GM12878 (cell line): ENCODE measurements at regions of chr12 and their contacts with region 1.

Region 1: DNA sequence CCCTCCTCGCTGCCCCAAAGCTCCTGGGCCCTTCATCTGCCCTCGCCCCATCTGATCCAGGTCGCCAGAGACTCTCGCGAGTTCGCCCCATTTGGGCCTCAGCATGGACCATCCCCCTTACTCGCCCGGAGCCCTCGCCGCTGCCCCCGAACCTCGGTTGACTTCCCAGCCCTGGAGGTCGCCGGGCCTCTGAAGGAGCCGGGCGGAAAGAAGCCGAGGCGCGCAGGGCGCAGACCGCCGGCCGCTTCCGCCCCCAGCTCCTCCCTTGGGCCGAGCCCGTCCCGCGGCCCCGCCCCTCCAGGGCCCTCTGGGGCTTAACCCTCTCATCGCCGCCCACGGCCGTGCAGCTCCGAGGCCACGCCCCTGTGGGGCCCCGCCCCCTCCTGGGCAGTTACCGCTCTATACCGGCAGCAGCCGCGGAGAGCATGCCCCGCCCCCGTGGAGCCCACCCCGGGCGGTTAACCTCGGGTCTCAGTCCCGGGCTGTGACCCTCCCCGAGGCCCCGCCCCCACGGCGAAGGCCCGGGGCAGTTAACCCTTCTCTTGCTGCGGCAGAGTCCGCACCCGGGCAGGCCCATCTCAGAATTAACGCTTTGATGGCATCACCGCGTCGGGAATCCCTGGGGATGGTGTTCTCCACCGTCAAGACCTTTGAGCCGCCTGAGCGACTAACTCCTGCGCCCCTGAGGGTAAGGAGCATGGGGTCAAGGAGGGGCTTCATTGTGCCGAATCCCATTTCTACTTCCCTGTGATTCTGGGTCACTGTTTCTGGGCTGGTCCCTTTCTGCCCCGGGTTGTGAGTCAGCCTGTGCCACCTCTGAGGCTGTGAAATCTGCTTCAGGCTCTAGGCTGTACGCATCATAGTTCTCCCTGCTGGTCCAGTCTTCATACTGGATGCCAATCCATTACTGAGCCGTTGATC is at the start of gene SPSB2:
- DNase-seq: peak; percentile 69
- ATAC-seq: peak; percentile 91
- H3K4me3 ChIP-seq: peak within 1 kb of the TSS; percentile 87
- H3K27ac ChIP-seq: peak within 1 kb of the TSS; percentile 59
- H3K4me1 ChIP-seq: peaks cover 30% of the 10 kb centered on the region
- H3K27me3 ChIP-seq: no peaks in the 10 kb centered on the region
- CTCF ChIP-seq: no peak
- EP300 ChIP-seq: no peak
- POLR2A ChIP-seq: peak; percentile 77
- RAD21 ChIP-seq: no peak
- polyA plus RNA-seq, gene SPSB2: 0.08 to 0.24 TPM

Region 2: GRCh38 chr12:6697584-6698351 is 175.6 kb before region 1 on chr12:
- CTCF ChIA-PET with region 1: no interaction called
- POLR2A ChIA-PET with region 1: no interaction called
- RAD21 ChIA-PET with region 1: no interaction called
- SMC1A ChIA-PET with region 1: no interaction called
- in situ Hi-C with region 1: no loop called
- intact Hi-C with region 1: no loop called
- DNase-seq: no peak
- ATAC-seq: peak; percentile 65
- H3K4me3 ChIP-seq: no peak overlapping the region
- H3K27ac ChIP-seq: no peak overlapping the region
- H3K4me1 ChIP-seq: peaks cover 12% of the 10 kb centered on the region
- H3K27me3 ChIP-seq: peaks cover 13 to 16% of the 10 kb centered on the region in 2 experiments
- CTCF ChIP-seq: peak; percentile 50 to 63 (median 60); a peak in 5 of 6 replicates
- EP300 ChIP-seq: no peak
- POLR2A ChIP-seq: no peak
- RAD21 ChIP-seq: peak; percentile 71

Region 3: DNA sequence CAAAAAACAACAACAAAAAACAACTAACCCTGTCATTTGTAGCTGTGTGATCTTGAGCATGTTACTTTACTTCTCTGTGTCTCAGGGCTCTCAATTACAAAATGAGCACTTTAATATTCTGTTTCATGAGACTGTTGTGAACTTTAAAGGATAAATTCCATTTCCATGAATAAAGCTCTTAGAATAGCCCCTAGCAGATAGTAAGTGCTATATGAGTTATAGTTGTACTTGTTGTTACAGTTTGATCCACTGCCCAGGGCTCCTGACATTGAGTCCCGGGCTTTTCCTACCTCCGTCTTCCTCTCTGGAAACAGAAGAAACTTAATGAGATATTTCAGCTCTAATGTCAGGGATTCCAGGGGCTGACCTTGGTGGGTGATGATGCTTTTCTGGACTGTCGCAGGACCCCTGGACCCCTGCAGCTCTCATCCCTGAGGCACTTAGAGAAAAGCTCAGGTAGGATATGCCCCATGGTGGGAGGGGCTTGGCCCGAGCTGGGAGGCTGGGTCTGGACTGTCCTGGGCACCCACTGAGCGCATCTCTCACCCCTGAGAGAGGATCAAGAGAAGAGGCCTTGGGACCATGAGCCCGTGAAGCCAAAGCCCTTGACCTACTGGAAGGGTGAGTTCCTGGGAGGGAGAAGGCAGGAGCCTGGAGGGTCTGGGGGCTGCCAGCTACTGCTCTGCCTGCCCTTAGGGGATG is 40.0 kb before region 1 on chr12:
- CTCF ChIA-PET with region 1: interaction called, 19 read pairs
- POLR2A ChIA-PET with region 1: interaction called, 4 read pairs
- RAD21 ChIA-PET with region 1: interaction called, 3 read pairs
- SMC1A ChIA-PET with region 1: no interaction called
- in situ Hi-C with region 1: no loop called
- intact Hi-C with region 1: no loop called
- DNase-seq: no peak
- ATAC-seq: no peak
- H3K4me3 ChIP-seq: no peak overlapping the region
- H3K27ac ChIP-seq: no peak overlapping the region
- H3K4me1 ChIP-seq: peaks cover 4% of the 10 kb centered on the region
- H3K27me3 ChIP-seq: peaks cover 11 to 17% of the 10 kb centered on the region in 2 experiments
- CTCF ChIP-seq: no peak
- EP300 ChIP-seq: no peak
- POLR2A ChIP-seq: no peak
- RAD21 ChIP-seq: no peak

Region 4: DNA sequence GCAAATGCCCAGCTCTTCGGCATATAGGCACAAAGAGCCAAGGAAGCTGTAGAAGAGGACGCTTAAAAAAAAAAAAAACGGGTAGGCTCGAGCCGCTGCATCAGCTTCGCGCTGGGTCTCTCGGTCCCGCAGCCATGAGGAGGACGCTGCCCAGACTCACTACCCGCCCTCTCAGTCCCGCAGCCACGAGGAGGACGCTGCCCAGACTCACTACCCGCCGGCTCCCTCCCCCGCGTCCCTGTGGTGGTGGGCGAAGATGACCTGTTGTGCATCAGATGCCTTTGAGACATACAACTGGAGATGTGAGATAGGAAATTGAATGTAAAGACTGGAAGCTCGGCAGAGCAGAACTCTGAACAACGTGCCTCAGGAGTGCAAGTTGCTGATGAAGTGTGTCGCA is 11.2 kb after region 1 on chr12:
- CTCF ChIA-PET with region 1: interaction called, 121 read pairs
- POLR2A ChIA-PET with region 1: interaction called, 7 read pairs
- RAD21 ChIA-PET with region 1: interaction called, 4 read pairs
- SMC1A ChIA-PET with region 1: interaction called, 3 read pairs
- in situ Hi-C with region 1: no loop called
- intact Hi-C with region 1: no loop called
- DNase-seq: no peak
- ATAC-seq: no peak
- H3K4me3 ChIP-seq: no peak overlapping the region
- H3K27ac ChIP-seq: no peak overlapping the region
- H3K4me1 ChIP-seq: no peaks in the 10 kb centered on the region
- H3K27me3 ChIP-seq: no peaks in the 10 kb centered on the region
- CTCF ChIP-seq: no peak
- EP300 ChIP-seq: no peak
- POLR2A ChIP-seq: no peak
- RAD21 ChIP-seq: no peak

Region 5: GRCh38 chr12:6904280-6905278 is 31.2 kb after region 1 on chr12 and contains the start of gene LRRC23:
- CTCF ChIA-PET with region 1: interaction called, 21 read pairs
- POLR2A ChIA-PET with region 1: interaction called, 4 read pairs
- RAD21 ChIA-PET with region 1: interaction called, 7 read pairs
- SMC1A ChIA-PET with region 1: interaction called, 3 read pairs
- in situ Hi-C with region 1: no loop called
- intact Hi-C with region 1: no loop called
- DNase-seq: peak; percentile 87
- ATAC-seq: peak; percentile 99
- H3K4me3 ChIP-seq: peak within 1 kb of the TSS; percentile 93
- H3K27ac ChIP-seq: no peak within 1 kb of the TSS
- H3K4me1 ChIP-seq: peaks cover 7% of the 10 kb centered on the region; the same call in 1 of the 2 replicates
- H3K27me3 ChIP-seq: no peaks in the 10 kb centered on the region
- CTCF ChIP-seq: no peak
- EP300 ChIP-seq: peak in 1 of 2 experiments; percentile 38; a peak in 1 of 4 replicates
- POLR2A ChIP-seq: peak; percentile 73
- RAD21 ChIP-seq: no peak
- polyA plus RNA-seq, gene LRRC23: 1.4 to 2.5 TPM

Region 6: GRCh38 chr12:6921996-6922946 is 48.9 kb after region 1 on chr12:
- CTCF ChIA-PET with region 1: interaction called, 22 read pairs
- POLR2A ChIA-PET with region 1: interaction called, 6 read pairs
- RAD21 ChIA-PET with region 1: interaction called, 4 read pairs
- SMC1A ChIA-PET with region 1: interaction called, 6 read pairs
- in situ Hi-C with region 1: no loop called
- intact Hi-C with region 1: loop called (anchors 2 kb)
- DNase-seq: no peak
- ATAC-seq: peak; percentile 32
- H3K4me3 ChIP-seq: peak overlapping the region; percentile 4; the same call in 1 of the 2 replicates
- H3K27ac ChIP-seq: peak overlapping the region; percentile 36
- H3K4me1 ChIP-seq: peaks cover 48% of the 10 kb centered on the region
- H3K27me3 ChIP-seq: no peaks in the 10 kb centered on the region
- CTCF ChIP-seq: 0 out of 6 replicates have a peak, but pooled peaks of 1 of the 3 experiments have one; percentile 13
- EP300 ChIP-seq: no peak
- POLR2A ChIP-seq: no peak
- RAD21 ChIP-seq: no peak

Region 7: DNA sequence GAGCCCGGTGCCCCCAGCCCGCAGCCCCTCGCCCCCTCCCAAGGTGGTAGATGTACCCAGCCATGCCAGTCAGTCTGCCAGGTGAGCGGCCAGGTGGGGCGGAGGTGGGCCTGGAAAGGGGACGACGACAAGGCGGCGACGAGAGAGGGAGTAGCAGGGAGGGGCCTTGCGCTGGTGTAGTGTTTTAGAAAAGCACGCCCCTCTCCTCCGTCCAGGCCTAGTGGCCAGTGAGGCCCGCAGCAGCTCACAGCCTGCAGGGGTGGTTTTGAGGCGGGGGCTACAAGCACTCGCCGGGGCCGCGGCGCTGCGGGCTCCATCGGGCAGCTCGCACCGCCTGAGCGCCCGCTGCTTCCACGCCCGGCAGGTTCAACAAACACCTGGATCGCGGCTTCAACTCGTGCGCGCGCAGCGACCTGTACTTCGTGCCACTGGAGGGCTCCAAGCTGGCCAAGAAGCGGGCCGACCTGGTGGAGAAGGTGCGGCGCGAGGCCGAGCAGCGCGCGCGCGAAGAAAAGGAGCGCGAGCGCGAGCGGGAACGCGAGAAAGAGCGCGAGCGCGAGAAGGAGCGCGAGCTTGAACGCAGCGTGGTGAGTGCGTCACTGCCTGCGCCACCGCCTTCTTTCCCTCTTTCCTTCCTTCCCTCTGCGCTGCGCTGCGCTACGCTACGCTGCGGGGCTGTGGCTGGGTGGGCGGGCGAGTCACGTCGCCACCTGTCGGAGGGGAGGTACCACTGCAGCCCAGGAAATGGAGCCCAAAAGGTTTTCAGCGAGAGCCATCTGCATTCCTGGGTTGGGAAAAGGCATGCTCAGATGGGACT is 64.3 kb after region 1 on chr12:
- CTCF ChIA-PET with region 1: interaction called, 26 read pairs
- POLR2A ChIA-PET with region 1: interaction called, 7 read pairs
- RAD21 ChIA-PET with region 1: interaction called, 20 read pairs
- SMC1A ChIA-PET with region 1: interaction called, 4 read pairs
- in situ Hi-C with region 1: no loop called
- intact Hi-C with region 1: no loop called
- DNase-seq: peak; percentile 90
- ATAC-seq: peak; percentile 96
- H3K4me3 ChIP-seq: peak overlapping the region; percentile 86
- H3K27ac ChIP-seq: peak overlapping the region; percentile 92
- H3K4me1 ChIP-seq: peaks cover 11% of the 10 kb centered on the region; the same call in 1 of the 2 replicates
- H3K27me3 ChIP-seq: no peaks in the 10 kb centered on the region
- CTCF ChIP-seq: peak; percentile 96 to 99 (median 97)
- EP300 ChIP-seq: no peak
- POLR2A ChIP-seq: peak; percentile 87
- RAD21 ChIP-seq: peak; percentile 35

Region 8: DNA sequence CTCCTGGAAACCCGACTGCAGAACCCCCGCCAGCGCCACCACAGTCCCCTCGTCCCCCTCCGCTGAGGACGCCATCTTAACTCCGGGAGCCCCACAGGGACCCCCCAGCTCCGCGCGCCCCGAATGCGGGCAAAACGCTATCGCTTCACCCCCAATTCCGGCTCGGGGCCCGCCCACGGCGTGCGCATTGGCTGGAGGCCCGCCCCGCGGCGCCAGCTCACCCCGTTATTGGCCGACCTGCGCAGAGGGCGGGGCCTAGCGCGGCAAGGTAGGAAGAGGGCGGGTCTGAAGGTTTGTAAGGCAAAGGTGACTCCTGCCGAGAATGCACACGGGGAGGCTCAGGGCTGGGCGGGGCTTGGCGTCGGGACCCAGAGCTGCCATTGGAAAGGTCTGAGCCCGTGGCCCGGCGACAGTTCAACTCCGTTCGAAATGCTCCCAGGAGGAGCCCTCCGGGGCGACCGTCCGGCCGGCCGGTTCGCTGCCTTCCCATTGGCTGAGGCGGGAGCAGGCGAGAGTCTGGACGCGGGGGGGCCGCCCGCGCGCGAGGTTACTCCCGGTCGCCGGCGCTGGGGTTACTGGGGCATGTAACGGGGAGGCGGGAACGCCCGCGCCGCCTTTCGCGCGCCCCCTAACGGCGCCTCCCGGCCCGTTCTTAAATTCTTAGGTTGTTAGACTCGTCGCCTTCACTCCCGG is 145.1 kb after region 1 on chr12 and contains the start of gene LPCAT3:
- CTCF ChIA-PET with region 1: interaction called, 13 read pairs
- POLR2A ChIA-PET with region 1: no interaction called
- RAD21 ChIA-PET with region 1: no interaction called
- SMC1A ChIA-PET with region 1: no interaction called
- in situ Hi-C with region 1: no loop called
- intact Hi-C with region 1: no loop called
- DNase-seq: peak; percentile 83
- ATAC-seq: peak; percentile 97
- H3K4me3 ChIP-seq: peak within 1 kb of the TSS; percentile 91
- H3K27ac ChIP-seq: peak within 1 kb of the TSS; percentile 75
- H3K4me1 ChIP-seq: no peaks in the 10 kb centered on the region
- H3K27me3 ChIP-seq: no peaks in the 10 kb centered on the region
- CTCF ChIP-seq: peak; percentile 82 to 90 (median 83); a peak in 5 of 6 replicates
- EP300 ChIP-seq: no peak
- POLR2A ChIP-seq: peak; percentile 86
- RAD21 ChIP-seq: peak; percentile 41
- polyA plus RNA-seq, gene LPCAT3: 2.6 to 3.7 TPM